ENCODE measurements at regions of chr4 and their contacts with region 1.

Region 1: GRCh38 chr4:54322818-54323417 is 93.8 kb downstream of the PDGFRA start:
- DNase-seq: peak; percentile 60
- ATAC-seq: peak; percentile 28
- H3K4me3 ChIP-seq: no peak overlapping the region
- H3K4me3 Mint-ChIP-seq: no peak overlapping the region
- H3K27ac ChIP-seq: no peak overlapping the region
- H3K27ac Mint-ChIP-seq: no peak overlapping the region
- H3K4me1 ChIP-seq: peaks cover 0 to 2% of the 10 kb centered on the region in 2 donors
- H3K4me1 Mint-ChIP-seq: peaks cover 3% of the 10 kb centered on the region
- H3K27me3 ChIP-seq: no peaks in the 10 kb centered on the region
- H3K27me3 Mint-ChIP-seq: peaks cover 8% of the 10 kb centered on the region
- CTCF ChIP-seq: peak; percentile 65

Region 2: DNA sequence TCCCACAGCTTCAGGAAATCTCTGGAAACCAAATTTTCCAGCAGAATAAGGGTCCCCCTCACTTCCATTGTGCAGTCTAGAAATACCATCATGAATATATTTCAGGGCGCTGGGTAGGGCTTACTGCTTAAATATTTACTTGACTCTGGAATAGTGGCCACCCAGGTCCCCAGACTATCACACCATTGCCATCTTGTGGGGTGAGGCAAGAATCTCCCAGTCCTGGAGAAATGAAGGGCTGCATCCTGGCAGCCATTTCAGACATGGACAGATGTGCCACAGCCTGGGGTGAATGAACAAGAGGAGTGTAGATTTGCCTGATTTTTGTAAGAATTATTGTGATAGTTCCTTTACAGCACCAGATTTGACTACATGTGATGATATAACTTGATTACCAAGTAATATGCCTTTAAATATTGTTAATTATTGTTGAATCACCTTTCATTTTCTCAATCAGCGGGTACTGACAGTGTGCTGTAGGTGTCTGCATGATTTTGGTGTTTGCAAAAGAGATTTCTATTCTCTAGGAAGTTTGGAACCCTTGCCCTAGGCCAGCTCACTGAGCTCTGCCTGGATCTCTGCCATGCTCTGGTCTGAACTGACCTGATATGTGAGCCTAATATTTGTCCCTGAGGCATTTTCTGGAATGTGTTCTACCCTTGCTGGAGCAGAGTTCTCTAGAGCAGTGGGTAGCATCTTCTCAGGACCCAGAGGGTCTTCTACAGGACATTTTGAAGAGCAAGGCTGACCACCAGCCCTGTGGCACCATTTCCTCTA is 518.3 kb after region 1 on chr4:
- CTCF ChIA-PET with region 1: interaction called, 3 read pairs
- POLR2A ChIA-PET with region 1: no interaction called
- intact Hi-C with region 1: loop called (anchors 5 kb)
- DNase-seq: no peak
- ATAC-seq: no peak
- H3K4me3 ChIP-seq: no peak overlapping the region
- H3K4me3 Mint-ChIP-seq: no peak overlapping the region
- H3K27ac ChIP-seq: no peak overlapping the region
- H3K27ac Mint-ChIP-seq: no peak overlapping the region
- H3K4me1 ChIP-seq: no peaks in the 10 kb centered on the region
- H3K4me1 Mint-ChIP-seq: no peaks in the 10 kb centered on the region
- H3K27me3 ChIP-seq: no peaks in the 10 kb centered on the region
- H3K27me3 Mint-ChIP-seq: no peaks in the 10 kb centered on the region
- CTCF ChIP-seq: no peak

Region 3: DNA sequence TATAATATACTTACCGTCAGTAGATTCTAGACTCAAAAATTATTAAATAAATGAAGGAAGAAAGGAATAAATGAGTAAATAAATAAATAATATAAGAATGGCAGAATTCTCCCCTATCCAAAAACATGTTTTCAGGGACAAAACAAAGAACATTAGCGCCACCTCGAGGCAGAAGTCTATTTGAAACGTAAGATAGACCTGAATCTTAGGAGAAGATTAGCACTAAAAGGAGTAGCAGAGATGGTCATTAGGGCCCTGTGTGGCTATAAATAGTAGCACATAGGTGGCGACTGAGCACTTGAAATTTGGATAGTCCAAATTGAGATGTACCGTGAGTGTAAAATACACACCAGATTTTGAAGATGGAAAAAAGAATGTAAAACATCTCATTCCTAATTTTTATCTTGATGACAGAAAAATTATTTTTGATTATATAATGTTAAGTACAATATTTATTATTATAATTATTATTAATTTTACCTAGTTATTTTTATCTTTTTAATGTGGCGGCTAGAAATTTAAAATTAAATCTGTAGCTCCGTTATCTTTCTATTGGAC is 998.9 kb after region 1 on chr4:
- CTCF ChIA-PET with region 1: no interaction called
- POLR2A ChIA-PET with region 1: no interaction called
- intact Hi-C with region 1: loop called (anchors 5 kb)
- DNase-seq: no peak
- ATAC-seq: no peak
- H3K4me3 ChIP-seq: no peak overlapping the region
- H3K4me3 Mint-ChIP-seq: no peak overlapping the region
- H3K27ac ChIP-seq: no peak overlapping the region
- H3K27ac Mint-ChIP-seq: no peak overlapping the region
- H3K4me1 ChIP-seq: no peaks in the 10 kb centered on the region
- H3K4me1 Mint-ChIP-seq: no peaks in the 10 kb centered on the region
- H3K27me3 ChIP-seq: peaks cover 0 to 4% (median 2%) of the 10 kb centered on the region in 4 experiments
- H3K27me3 Mint-ChIP-seq: peaks cover 36% of the 10 kb centered on the region
- CTCF ChIP-seq: peak; percentile 44

Measured in B cell (primary cell).